CD8-positive, alpha-beta T cell (primary cell): ENCODE measurements at regions of chr5 and their contacts with region 1.

Region 1: DNA sequence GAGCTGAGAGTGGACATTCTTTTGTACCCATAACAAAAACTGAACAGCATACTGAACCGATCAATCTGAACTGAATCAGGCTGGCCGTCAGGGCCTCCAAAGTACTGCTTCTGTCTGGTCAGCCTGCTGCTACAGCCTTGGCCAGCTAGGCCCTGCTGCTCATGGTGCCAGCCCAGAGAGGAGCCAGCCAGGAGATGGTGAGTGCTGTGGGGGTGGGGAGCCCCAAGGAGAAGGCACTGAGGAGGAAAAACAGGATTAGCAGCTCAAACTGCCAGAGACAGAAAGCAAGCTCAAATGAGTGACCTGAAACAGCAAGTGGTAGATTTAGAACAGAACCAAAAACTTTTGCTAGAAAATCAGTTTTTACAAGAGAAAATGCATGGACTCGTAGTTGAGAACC is 23.9 kb downstream of the SRP19 start:
- DNase-seq: no peak
- ATAC-seq: no peak
- H3K4me3 ChIP-seq: no peak overlapping the region
- H3K4me3 Mint-ChIP-seq: no peak overlapping the region
- H3K27ac ChIP-seq: no peak overlapping the region
- H3K27ac Mint-ChIP-seq: peak overlapping the region; percentile 30
- H3K4me1 ChIP-seq: peaks cover 19% of the 10 kb centered on the region
- H3K4me1 Mint-ChIP-seq: peaks cover 41% of the 10 kb centered on the region
- H3K27me3 ChIP-seq: no peaks in the 10 kb centered on the region
- H3K27me3 Mint-ChIP-seq: no peaks in the 10 kb centered on the region
- CTCF ChIP-seq: no peak

Region 2: GRCh38 chr5:112895682-112896081 is 10.7 kb after region 1 on chr5:
- CTCF ChIA-PET with region 1: interaction called, 3 read pairs
- POLR2A ChIA-PET with region 1: no interaction called
- intact Hi-C with region 1: loop called in 1 of 2 experiments (anchors 2 kb)
- DNase-seq: no peak
- ATAC-seq: no peak
- H3K4me3 ChIP-seq: no peak overlapping the region
- H3K4me3 Mint-ChIP-seq: no peak overlapping the region
- H3K27ac ChIP-seq: no peak overlapping the region
- H3K27ac Mint-ChIP-seq: no peak overlapping the region
- H3K4me1 ChIP-seq: no peaks in the 10 kb centered on the region
- H3K4me1 Mint-ChIP-seq: peaks cover 12% of the 10 kb centered on the region
- H3K27me3 ChIP-seq: no peaks in the 10 kb centered on the region
- H3K27me3 Mint-ChIP-seq: no peaks in the 10 kb centered on the region
- CTCF ChIP-seq: no peak

Region 3: GRCh38 chr5:113034182-113034773 is 149.3 kb after region 1 on chr5:
- CTCF ChIA-PET with region 1: no interaction called
- POLR2A ChIA-PET with region 1: no interaction called
- intact Hi-C with region 1: no loop called
- DNase-seq: no peak
- ATAC-seq: no peak
- H3K4me3 ChIP-seq: no peak overlapping the region
- H3K4me3 Mint-ChIP-seq: no peak overlapping the region
- H3K27ac ChIP-seq: no peak overlapping the region
- H3K27ac Mint-ChIP-seq: no peak overlapping the region
- H3K4me1 ChIP-seq: no peaks in the 10 kb centered on the region
- H3K4me1 Mint-ChIP-seq: peaks cover 6% of the 10 kb centered on the region
- H3K27me3 ChIP-seq: no peaks in the 10 kb centered on the region
- H3K27me3 Mint-ChIP-seq: no peaks in the 10 kb centered on the region
- CTCF ChIP-seq: no peak